ENCODE measurements at regions of chr19 and their contacts with region 1.

Region 1: DNA sequence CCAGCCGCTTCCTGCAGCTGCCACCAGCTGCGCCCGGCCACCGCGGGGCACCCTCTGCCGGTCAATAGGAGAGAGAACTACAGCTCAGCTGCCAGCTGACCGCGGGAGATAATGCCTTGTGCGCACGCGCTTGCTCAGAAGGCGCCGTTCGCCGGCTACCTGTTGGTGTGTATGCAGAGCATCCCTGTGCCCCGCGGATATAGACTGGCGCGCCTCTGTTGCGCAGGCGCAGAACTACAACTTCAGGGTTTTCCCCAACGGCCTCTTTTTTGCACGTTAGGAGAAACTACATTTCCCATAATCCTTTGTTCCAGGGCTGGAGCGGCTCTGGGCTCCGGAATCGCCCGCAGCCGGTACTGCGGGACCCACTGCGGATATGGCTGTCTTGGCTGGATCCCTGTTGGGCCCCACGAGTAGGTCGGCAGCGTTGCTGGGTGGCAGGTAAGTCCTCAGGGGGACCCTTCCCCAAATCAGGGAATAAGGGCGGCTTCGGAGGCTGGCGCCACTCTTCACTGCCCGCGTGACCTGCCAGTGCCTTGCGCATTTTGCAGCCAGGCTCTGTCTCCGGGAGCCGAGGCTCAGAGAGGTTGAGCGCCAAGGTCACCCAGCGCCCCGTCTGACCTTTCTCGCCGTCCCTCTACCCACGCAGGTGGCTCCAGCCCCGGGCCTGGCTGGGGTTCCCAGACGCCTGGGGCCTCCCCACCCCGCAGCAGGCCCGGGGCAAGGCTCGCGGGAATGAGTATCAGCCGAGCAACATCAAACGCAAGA is at the start of gene MRPL34:
- DNase-seq: peak; percentile 89 to 97
- H3K4me3 ChIP-seq: peak within 1 kb of the TSS; percentile 66 to 72
- H3K27ac ChIP-seq: peak within 1 kb of the TSS; percentile 81 to 90
- H3K4me1 ChIP-seq: peaks cover 2 to 30% of the 10 kb centered on the region in 2 donors
- H3K27me3 ChIP-seq: no peaks in the 10 kb centered on the region
- CTCF ChIP-seq: peak; percentile 79 to 91 (median 81)
- total RNA-seq, gene MRPL34: 98.9 TPM

Region 2: GRCh38 chr19:17266975-17267788 is 38.5 kb before region 1 on chr19 and contains the start of gene BABAM1:
- intact Hi-C with region 1: loop called (anchors 2 kb)
- DNase-seq: peak; percentile 92 to 99
- H3K4me3 ChIP-seq: peak within 1 kb of the TSS; percentile 79 to 96
- H3K27ac ChIP-seq: peak within 1 kb of the TSS; percentile 61 to 83
- H3K4me1 ChIP-seq: peaks cover 5 to 6% of the 10 kb centered on the region in 2 donors
- H3K27me3 ChIP-seq: no peaks in the 10 kb centered on the region
- CTCF ChIP-seq: no peak
- total RNA-seq, gene BABAM1: 85.5 TPM

Region 3: DNA sequence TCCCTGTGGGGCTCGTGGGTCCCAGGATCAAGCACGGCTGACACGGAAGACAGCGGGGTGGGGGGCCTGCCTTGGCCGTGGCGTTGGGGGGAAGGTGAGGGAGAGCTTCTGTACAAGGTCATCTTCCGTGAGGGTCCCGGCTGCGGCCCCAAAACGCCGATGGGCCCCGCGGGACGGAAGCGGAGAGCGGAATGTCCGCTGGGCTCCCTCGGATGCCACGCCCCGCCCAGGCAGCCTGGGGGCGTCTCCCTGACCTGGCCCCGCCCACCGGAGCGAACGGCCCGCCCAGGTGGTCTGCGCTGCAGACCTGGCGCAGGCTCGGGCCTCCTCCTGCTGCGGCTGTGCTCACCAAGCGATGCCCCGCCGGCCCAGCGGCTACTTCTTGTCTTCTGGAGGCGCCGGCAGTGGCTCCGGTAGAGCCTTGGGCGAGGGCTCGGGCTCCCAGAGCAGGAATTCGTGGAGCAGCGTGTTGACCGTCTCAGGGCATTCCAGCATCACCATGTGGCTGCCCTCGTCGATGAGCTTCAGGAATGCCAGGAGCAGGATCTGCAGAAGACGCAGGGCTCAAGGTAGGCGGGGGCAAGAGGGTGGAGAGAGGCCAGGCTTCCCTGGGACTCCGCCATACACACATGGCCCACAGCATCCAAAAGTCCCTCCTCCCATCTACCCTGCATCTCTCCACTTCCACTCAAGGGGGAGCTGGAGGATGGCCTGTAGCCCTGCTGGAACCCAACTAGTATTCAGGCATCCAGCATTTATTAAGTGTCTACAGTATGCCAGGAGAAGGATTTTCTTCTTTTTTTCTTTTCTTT is 13.2 kb before region 1 on chr19:
- intact Hi-C with region 1: loop called (anchors 1 kb)
- DNase-seq: peak; percentile 41 to 86
- H3K4me3 ChIP-seq: peak overlapping the region; percentile 50 to 66
- H3K27ac ChIP-seq: peak overlapping the region; percentile 69 to 73
- H3K4me1 ChIP-seq: peaks cover 3 to 10% of the 10 kb centered on the region in 2 donors
- H3K27me3 ChIP-seq: no peaks in the 10 kb centered on the region
- CTCF ChIP-seq: peak; percentile 71 to 83 (median 82)

Region 4: DNA sequence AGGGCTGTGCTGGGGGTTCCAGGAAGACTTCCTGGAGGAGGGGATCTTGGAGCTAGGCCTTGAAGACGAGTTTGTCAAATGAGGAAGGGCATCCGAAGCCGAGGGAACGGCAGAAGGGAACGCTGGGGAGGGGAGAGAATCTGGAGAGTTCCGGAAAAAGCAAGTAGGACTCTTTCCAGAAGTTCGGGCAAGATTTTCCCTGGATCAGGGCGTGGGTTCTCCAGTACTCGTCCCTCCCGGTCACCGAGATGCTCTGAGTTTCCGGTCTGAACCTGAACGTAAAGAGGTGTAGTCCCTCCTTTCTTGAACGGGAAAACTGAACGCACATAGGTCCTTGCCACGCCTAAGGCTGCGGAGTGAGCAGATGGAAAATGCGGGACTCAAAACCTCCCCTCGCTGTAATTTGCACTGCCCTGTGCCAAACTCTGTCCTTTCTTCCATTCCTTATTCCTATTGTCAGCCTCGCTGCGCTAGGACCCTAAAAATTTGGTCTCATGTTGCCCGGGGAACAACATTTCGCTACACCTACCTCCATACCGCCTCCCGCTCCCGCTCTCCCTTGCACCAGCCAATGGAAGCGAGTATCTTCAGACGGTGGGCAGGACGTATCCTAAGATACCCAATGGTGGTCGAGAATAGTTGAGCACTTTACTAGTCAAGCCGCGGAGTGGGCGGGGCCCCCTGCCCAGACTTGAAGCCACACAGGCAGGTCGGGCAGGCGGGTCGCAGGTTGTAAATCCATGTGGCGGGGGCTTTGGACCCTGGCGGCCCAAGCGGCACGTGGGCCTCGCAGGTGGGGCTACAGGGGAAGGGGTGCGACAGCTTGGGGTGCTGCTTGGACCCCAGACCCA is 31.4 kb after region 1 on chr19 and contains the start of gene GTPBP3:
- intact Hi-C with region 1: loop called (anchors 2 kb)
- DNase-seq: peak; percentile 97 to 99
- H3K4me3 ChIP-seq: peak within 1 kb of the TSS; percentile 84 to 91
- H3K27ac ChIP-seq: peak within 1 kb of the TSS; percentile 91 to 95
- H3K4me1 ChIP-seq: peaks cover 15 to 23% of the 10 kb centered on the region in 2 donors
- H3K27me3 ChIP-seq: no peaks in the 10 kb centered on the region
- CTCF ChIP-seq: no peak
- total RNA-seq, gene GTPBP3: 256 TPM

Measured in ascending aorta (tissue), 2 donors.